ENCODE measurements at regions of chr9 and their contacts with region 1.

Region 1: DNA sequence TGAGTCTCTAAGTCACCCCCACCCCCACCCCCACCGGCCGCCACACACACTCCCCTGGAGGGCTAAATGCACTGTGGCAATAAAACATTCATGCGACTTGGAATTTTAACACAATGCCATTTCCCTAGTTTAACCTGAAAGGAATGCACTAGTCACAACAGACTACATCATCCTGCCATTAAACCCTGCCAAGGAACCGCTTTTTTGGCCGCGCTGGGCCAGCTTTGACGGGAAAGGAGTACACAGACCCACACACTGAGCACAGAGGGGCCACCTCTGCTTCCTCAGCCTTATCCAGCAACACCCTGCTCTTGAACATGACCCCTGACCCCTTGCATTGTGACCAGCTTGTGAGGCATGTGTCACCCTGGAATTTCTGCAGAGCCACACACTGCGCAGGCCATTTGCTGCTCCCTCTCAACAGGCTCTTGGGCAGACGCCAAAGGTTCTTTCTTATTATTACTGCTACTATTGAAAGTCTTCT is 165.3 kb downstream of the BNC2 start:
- DNase-seq: peak; percentile 85

Region 2: GRCh38 chr9:16521868-16522411 is 183.2 kb before region 1 on chr9:
- intact Hi-C with region 1: loop called (anchors 10 kb)
- DNase-seq: peak; percentile 77

Region 3: GRCh38 chr9:16626577-16627131 is 78.5 kb before region 1 on chr9:
- intact Hi-C with region 1: loop called (anchors 5 kb)
- DNase-seq: no peak

Measured in cardiac septum (tissue), 1 donor.